HEK293 (cell line): ENCODE measurements at regions of chr19 and their contacts with region 1.

Region 1: DNA sequence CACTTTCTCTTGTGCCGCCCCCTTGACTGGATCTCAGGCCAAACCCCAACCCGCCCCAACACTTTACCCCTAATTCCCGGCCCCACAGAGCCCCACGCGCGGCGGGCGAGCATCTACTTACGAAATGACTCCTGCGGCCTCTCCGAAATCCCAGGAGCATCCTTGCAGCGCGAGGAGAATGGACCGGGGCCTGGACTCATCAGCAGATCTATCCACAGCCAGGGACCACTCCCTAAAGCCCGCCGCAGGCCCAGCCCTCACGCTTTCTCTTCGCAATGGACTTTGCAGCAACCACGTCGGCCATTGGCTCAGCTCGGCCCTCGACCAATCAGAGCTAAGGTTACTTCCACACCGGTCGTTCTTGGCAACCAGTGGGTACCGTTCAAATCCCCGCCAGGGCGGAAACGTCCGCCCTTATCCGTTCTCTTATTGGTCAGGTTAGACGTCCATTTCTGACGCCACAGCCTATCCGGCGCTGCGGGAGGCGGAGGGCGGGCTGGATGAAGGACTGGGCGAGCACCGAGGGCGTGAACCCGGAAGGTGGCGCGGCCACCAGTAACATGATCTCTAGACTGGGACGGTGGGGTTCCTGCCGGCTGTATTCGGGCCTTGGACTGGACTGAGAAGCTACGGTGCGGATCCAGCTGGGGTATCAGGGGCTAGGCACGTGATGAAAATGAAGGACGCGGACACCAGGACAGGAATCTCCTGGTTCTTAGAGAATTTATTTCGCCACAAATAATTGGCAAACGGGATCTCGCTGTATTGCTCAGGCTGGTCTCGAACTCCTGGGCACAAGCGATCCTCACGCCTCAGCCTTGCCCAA is at the starts of genes CEP89 and FAAP24:
- H3K4me3 ChIP-seq: peak within 1 kb of the TSS; percentile 64
- H3K27ac ChIP-seq: peak within 1 kb of the TSS; percentile 83
- H3K4me1 ChIP-seq: peaks cover 14% of the 10 kb centered on the region
- CTCF ChIP-seq: peak; percentile 56; the same call in 1 of the 2 replicates

Region 2: DNA sequence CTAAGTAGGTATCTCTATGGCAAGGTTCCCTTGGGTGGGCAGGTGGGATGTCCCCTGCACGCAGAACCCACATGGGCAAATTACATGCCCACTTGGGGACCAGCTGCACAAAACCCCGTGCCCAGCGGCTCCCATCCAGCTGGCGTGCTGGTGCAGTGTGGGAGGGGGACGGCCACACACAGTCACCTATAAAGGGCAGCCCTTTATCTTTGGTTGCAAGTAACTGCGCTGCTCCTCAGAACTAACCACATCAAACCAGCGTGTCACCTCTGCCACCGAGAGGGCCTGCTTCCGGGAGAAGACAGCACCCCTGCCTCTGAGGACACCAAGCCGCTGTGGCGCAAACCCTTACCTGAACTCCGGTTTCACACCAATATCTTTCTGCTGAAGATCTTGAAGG is 329.2 kb before region 1 on chr19:
- CTCF ChIA-PET with region 1: no interaction called
- POLR2A ChIA-PET with region 1: no interaction called
- H3K4me3 ChIP-seq: no peak overlapping the region
- H3K27ac ChIP-seq: no peak overlapping the region
- H3K4me1 ChIP-seq: no peaks in the 10 kb centered on the region
- CTCF ChIP-seq: no peak

Region 3: GRCh38 chr19:32691291-32691951 is 280.5 kb before region 1 on chr19 and contains the start of gene NUDT19:
- CTCF ChIA-PET with region 1: interaction called, 3 read pairs
- POLR2A ChIA-PET with region 1: interaction called, 14 read pairs
- H3K4me3 ChIP-seq: peak within 1 kb of the TSS; percentile 52
- H3K27ac ChIP-seq: peak within 1 kb of the TSS; percentile 96
- H3K4me1 ChIP-seq: peaks cover 23% of the 10 kb centered on the region
- CTCF ChIP-seq: peak; percentile 56; the same call in 1 of the 2 replicates

Region 4: DNA sequence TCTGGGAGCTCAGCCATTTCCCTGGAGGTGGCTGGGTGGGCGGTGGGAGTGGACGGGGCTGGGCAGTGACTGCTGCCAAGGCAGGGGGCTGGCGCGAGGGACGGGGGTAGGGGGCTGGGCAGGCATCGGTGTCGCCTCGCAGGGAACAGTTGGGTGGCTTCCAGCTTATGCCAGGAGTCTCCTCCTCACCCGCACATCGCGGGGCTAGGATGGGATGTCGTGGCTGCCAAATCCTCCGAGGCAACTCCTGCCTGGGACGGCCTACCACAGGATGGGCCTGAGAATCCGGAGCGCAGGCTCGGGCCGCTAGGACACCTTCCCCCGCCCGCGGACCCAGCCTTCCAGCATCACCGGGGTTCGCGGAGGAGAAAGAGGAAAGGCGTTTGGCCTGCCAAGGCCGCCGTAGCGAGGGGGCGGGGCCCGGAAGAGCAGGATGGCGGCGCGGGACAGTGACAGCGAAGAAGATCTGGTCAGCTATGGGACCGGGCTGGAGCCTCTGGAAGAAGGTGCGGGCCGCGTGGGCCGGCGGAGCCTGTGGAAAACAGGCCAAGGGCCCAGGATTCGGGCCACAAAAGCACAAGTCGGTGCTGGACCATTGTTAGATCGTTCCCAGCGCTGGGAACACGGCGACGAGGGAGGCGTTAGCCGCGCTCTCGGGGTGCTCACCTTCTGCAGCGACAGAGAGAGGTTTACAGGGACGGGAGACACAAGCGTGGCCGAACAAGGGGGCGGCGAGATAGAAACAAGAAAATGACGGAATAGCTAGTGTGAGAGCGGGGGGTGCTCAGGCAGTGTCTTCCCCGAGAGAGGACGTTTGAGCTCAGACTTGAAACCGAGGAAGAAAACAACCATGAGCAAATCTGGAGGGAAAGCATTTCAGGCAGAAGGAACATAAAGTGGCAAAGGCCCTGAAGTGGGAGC is 109.1 kb after region 1 on chr19 and contains the start of gene GPATCH1:
- CTCF ChIA-PET with region 1: interaction called, 16 read pairs
- POLR2A ChIA-PET with region 1: interaction called, 9 read pairs
- H3K4me3 ChIP-seq: peak within 1 kb of the TSS; percentile 66
- H3K27ac ChIP-seq: peak within 1 kb of the TSS; percentile 89
- H3K4me1 ChIP-seq: peaks cover 26% of the 10 kb centered on the region
- CTCF ChIP-seq: peak; percentile 82

Region 5: DNA sequence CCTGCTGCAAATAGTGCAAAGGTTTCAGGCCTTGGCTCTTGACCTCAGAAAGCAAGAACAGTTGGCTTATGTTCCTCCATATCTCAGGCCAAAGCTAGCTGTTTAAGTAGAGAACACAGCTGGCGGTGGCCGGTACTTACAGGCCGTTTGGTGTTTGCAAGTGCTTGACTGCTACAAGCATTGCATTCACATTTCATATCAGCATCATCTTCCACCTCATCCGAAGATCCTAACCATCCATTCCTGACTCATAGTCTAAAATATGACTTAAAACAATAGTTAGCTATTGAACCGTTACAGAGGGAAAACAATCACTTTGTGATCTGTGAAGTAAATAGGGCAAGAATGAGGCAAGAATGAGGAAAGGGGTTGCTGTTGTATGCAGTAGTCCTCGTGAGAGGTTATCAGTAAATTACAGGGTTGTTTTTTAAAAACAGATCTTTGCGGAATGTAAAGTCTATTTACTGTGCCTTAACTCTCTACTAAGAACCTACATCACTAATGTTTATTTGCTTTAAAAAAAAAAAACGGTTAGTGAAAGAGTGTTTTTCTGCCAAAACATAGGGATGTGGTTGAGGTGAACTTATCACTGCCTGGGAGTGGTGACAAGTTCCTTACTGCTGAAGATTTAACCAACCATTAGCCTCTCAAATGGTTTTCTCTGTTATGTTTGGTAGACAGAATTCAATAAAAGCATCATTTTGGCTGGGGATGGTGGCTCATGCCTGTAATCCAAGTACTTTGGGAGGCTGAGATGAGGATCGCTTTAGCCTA is 138.4 kb after region 1 on chr19:
- CTCF ChIA-PET with region 1: interaction called, 45 read pairs
- POLR2A ChIA-PET with region 1: interaction called, 3 read pairs
- H3K4me3 ChIP-seq: no peak overlapping the region
- H3K27ac ChIP-seq: no peak overlapping the region
- H3K4me1 ChIP-seq: no peaks in the 10 kb centered on the region
- CTCF ChIP-seq: no peak

Region 6: GRCh38 chr19:33176670-33177416 is 204.9 kb after region 1 on chr19:
- CTCF ChIA-PET with region 1: interaction called, 6 read pairs
- POLR2A ChIA-PET with region 1: interaction called, 14 read pairs
- H3K4me3 ChIP-seq: peak overlapping the region; percentile 59
- H3K27ac ChIP-seq: peak overlapping the region; percentile 88
- H3K4me1 ChIP-seq: peaks cover 20% of the 10 kb centered on the region
- CTCF ChIP-seq: no peak; the same call in 1 of the 2 replicates